HCT116 (cell line): ENCODE measurements at regions of chr4 and their contacts with region 1.

Region 1: GRCh38 chr4:52665592-52665991 is 6.5 kb upstream of the USP46 start:
- DNase-seq: peak; percentile 44
- ATAC-seq: peak; percentile 86
- H3K4me3 ChIP-seq: no peak overlapping the region
- H3K27ac ChIP-seq: no peak overlapping the region
- H3K4me1 ChIP-seq: peaks cover 4 to 23% of the 10 kb centered on the region in 2 experiments; a peak in 3 of 4 replicates
- H3K27me3 ChIP-seq: no peaks in the 10 kb centered on the region
- CTCF ChIP-seq: peak; percentile 38 to 82 (median 57)
- POLR2A ChIP-seq: no peak
- RAD21 ChIP-seq: peak; percentile 76

Region 2: DNA sequence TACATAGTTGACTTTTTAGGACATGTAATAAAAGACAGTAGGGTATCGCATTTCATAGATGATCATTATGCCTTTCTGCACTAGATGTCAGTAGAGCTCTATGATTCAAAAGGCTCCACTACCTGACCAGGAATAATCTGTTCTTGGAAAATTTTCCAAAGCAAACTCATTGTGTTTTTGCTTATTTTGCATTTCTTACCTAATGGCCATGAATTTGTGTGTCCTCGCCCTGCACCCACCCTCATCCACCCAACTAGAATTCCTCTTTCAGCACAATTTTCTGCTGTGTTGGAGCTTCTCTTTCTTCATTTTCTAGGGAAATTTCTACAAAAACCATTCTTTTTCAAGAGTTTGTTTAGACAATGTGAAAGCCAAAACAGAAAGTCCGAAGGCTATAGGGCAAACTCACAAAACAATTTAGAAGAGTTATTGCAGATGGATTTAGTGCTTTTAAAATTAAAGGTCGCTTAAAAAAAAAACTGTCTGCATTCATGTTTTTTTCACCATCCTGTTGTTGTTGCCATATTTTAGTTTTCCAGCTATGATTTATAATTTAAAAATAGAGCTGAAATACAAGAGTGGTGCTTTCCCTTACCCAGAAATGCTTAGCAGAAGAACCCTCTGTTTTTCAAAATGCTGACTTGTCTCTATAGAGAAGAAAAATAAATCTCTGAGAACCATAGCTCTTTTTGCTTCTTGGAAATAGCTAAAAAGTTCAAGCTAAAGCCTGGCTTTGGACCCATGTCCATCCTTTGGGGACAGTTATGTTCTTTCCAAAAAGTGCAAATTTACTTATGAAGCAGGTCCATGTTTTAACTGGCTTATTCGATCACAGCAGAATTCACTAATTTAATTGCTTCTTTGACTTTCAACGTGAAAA is 430.8 kb before region 1 on chr4:
- CTCF ChIA-PET with region 1: no interaction called
- POLR2A ChIA-PET with region 1: no interaction called
- RAD21 ChIA-PET with region 1: no interaction called
- intact Hi-C with region 1: loop called (anchors 1 kb)
- DNase-seq: peak; percentile 41
- ATAC-seq: peak; percentile 89
- H3K4me3 ChIP-seq: no peak overlapping the region
- H3K27ac ChIP-seq: no peak overlapping the region
- H3K4me1 ChIP-seq: peaks cover 0 to 2% of the 10 kb centered on the region in 2 experiments; a peak in 1 of 4 replicates
- H3K27me3 ChIP-seq: peaks cover 19% of the 10 kb centered on the region
- CTCF ChIP-seq: peak; percentile 35 to 66 (median 51); a peak in 4 of 6 replicates
- POLR2A ChIP-seq: no peak
- RAD21 ChIP-seq: peak; percentile 79

Region 3: DNA sequence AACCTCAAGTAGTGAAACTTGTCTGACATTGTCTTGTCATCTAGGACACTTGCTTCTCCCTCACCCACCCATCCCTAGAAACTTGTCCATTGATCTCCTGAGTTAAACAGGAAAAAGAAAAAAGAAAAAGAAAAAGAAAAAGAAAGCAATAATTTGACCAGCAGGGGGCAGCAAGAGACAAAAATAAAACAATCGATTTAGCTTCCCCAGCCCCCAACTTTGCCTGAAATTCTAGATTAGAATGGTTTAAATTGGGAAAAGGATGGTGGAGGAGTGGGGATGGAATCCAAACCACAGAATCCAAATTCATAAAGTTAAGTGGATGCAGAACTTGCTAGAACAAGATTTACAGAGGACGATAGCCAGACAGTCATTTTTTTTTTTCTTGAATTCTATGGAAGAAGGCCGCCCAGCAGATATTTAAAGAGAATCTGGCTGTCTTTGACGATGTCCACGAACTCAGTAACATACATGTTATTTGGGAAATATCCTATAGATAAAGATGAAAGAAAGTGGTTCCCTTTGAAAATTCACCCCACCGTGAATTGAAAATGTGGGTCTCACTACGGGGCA is 289.4 kb before region 1 on chr4:
- CTCF ChIA-PET with region 1: interaction called, 13 read pairs
- POLR2A ChIA-PET with region 1: no interaction called
- RAD21 ChIA-PET with region 1: no interaction called
- intact Hi-C with region 1: loop called (anchors 1 kb)
- DNase-seq: peak; percentile 33
- ATAC-seq: 0 out of 2 replicates have a peak, but pooled peaks have one; percentile 27
- H3K4me3 ChIP-seq: no peak overlapping the region
- H3K27ac ChIP-seq: no peak overlapping the region
- H3K4me1 ChIP-seq: no peaks in the 10 kb centered on the region
- H3K27me3 ChIP-seq: peaks cover 10% of the 10 kb centered on the region
- CTCF ChIP-seq: peak; percentile 33 to 74 (median 70); a peak in 4 of 6 replicates
- POLR2A ChIP-seq: no peak
- RAD21 ChIP-seq: peak; percentile 76

Region 4: GRCh38 chr4:52408032-52408431 is 257.6 kb before region 1 on chr4:
- CTCF ChIA-PET with region 1: no interaction called
- POLR2A ChIA-PET with region 1: no interaction called
- RAD21 ChIA-PET with region 1: no interaction called
- intact Hi-C with region 1: no loop called
- DNase-seq: no peak
- ATAC-seq: no peak
- H3K4me3 ChIP-seq: no peak overlapping the region
- H3K27ac ChIP-seq: no peak overlapping the region
- H3K4me1 ChIP-seq: peaks cover 10 to 11% of the 10 kb centered on the region in 2 experiments
- H3K27me3 ChIP-seq: no peaks in the 10 kb centered on the region
- CTCF ChIP-seq: no peak
- POLR2A ChIP-seq: no peak
- RAD21 ChIP-seq: no peak

Region 5: DNA sequence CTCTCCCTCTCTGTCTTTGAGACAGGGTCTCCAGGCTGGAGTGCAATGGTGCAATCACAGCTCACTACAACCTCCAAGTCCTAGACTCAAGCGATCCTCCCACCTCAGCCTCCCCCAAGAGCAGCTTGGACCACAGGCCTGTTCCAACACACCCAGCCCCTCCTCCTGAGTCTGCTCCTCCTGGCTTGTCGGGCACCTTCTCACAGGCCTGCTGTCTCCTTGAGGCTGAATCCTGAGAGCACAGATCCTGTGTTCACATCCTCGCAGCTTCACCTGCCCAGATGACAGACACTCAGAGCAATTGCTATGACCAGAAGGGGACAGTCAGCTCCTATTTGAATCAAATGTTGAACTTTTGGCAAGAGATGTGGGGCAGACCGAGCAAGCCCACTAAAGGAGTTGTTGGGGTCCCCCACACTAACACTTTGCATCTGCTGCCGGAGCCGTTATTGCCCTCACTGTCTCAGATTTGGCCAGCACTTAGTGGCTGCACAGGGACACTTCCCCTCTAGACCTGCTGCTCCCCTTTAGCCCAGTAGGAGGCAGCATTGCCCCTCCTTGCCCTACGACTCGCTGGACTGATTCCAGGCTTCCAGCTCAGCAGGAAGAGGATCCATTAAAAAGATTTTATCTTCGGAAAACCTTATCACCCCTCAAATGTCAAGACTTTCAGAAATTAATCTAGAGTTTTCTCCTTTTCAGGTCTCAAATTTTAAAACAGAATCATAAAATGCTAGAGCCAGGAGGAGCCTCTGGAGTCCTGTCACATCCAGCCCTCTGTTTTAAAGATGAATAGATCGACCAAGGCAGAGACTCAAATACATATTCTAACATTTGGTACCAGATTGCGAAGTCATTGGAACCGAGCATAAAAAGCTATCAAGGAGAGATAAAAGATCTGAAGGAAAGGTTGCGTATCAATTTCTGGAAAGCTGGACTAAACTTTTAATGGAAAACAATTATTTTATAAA is 120.2 kb before region 1 on chr4:
- CTCF ChIA-PET with region 1: interaction called, 7 read pairs
- POLR2A ChIA-PET with region 1: no interaction called
- RAD21 ChIA-PET with region 1: no interaction called
- intact Hi-C with region 1: loop called (anchors 2 kb)
- DNase-seq: peak; percentile 52
- ATAC-seq: peak; percentile 97
- H3K4me3 ChIP-seq: no peak overlapping the region; a peak in 1 of 4 replicates
- H3K27ac ChIP-seq: no peak overlapping the region
- H3K4me1 ChIP-seq: peaks cover 0 to 3% of the 10 kb centered on the region in 2 experiments; a peak in 1 of 4 replicates
- H3K27me3 ChIP-seq: no peaks in the 10 kb centered on the region
- CTCF ChIP-seq: peak; percentile 84 to 98 (median 95)
- POLR2A ChIP-seq: no peak
- RAD21 ChIP-seq: peak; percentile 94